HEK293 (cell line): ENCODE measurements at regions of chr19 and their contacts with region 1.

Region 1: GRCh38 chr19:18328340-18329034 is 5.6 kb upstream of the LSM4 start:
- H3K4me3 ChIP-seq: peak overlapping the region; percentile 23
- H3K27ac ChIP-seq: peak overlapping the region; percentile 27; the same call in 1 of the 2 replicates
- H3K4me1 ChIP-seq: peaks cover 1% of the 10 kb centered on the region
- CTCF ChIP-seq: peak; percentile 59; the same call in 1 of the 2 replicates

Region 2: DNA sequence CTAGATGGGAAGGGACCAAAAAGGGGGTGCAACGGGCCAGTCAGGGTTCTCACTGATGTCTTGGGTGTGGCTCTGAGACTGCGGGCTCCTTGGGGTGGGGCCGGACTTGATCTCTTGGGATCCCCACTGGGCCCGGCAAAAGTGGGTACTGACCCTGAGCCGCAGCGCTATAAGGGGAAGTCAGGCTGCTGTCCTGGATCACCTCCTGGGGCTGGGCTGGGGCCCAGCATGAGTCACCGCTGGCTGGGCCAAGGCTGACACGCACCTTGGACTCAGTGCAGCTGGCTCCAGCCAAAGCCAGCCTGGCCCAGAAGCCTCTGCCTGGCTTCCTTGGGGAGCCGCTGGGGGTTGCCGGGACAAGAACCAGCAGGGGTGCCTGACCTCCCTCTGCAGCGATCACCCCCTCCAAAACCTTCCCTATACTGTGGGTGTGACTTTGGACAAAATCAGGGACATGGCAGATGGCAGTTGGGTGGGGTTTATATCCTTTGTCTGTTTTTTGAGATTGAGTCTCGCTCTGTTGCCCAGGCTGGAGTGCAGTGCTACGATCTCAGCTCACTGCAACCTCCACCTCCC is 53.6 kb before region 1 on chr19:
- CTCF ChIA-PET with region 1: interaction called, 195 read pairs
- POLR2A ChIA-PET with region 1: interaction called, 117 read pairs
- H3K4me3 ChIP-seq: no peak overlapping the region
- H3K27ac ChIP-seq: no peak overlapping the region
- H3K4me1 ChIP-seq: no peaks in the 10 kb centered on the region
- CTCF ChIP-seq: no peak

Region 3: DNA sequence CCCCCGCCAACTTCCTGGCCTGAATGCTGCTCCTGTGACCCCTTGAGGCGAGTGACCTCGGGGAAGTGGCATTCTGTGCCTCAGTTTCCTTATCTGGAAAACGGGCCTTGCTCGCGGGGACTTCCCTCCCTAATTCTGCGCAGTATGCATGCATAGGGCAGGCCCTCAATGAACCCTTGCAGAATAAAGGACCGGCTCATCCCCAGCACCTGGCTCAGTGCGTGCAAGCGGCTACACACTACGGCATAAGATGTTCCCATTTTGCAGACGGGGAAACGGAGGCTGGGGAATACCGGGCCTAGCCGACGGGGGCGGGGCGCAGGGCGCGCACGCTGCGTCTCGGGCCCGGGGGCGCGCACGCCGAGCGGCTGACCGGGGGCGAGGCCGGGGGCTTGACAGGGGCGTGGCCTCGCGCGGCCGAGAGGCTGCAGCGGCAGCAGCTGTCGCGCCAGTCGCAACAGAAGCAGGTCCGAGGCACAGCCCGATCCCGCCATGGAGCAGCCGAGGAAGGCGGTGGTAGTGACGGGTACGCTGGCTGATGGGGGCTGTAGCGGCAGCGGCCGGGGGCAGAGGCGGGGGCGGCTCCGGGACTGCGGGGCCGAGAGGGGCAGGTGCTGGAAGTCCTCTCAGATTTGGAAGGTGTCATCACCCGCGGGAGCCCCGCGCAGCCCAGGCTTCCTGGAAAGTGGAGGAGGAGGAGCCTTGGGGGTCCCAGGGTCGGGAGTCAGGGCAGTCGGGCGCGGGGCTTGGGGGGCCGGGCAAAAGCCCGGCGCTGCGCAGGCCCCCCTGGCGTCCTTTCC is 11.9 kb after region 1 on chr19 and contains the start of gene PGPEP1:
- CTCF ChIA-PET with region 1: interaction called, 58 read pairs
- POLR2A ChIA-PET with region 1: interaction called, 9 read pairs
- H3K4me3 ChIP-seq: peak within 1 kb of the TSS; percentile 90
- H3K27ac ChIP-seq: no peak within 1 kb of the TSS
- H3K4me1 ChIP-seq: no peaks in the 10 kb centered on the region
- CTCF ChIP-seq: no peak

Region 4: DNA sequence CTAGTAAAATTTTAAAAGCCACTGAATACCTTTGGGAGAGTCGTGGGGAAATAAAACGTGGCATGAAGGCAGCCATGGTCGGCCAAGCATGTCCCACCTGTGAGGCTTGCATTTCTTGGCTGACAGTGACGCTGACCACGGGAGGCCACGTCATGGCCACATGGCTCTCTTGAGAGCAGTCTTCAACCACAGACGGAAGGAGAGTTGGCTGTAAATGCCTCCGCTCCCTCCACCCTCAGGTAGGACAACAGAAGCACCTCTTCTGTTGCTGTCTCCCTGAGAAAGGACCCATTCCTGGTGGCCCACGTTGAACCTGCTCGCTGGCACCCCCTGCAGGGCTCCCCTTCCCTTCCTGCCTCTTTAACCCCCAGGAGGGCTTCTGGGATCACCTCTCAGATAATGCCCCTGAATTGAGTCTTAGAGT is 79.6 kb after region 1 on chr19:
- CTCF ChIA-PET with region 1: interaction called, 13 read pairs
- POLR2A ChIA-PET with region 1: interaction called, 5 read pairs
- H3K4me3 ChIP-seq: no peak overlapping the region
- H3K27ac ChIP-seq: no peak overlapping the region
- H3K4me1 ChIP-seq: no peaks in the 10 kb centered on the region
- CTCF ChIP-seq: peak; percentile 52; the same call in 1 of the 2 replicates